Esophagus squamous epithelium (tissue), 5 donors: ENCODE measurements at regions of chrX and their contacts with region 1.

Region 1: DNA sequence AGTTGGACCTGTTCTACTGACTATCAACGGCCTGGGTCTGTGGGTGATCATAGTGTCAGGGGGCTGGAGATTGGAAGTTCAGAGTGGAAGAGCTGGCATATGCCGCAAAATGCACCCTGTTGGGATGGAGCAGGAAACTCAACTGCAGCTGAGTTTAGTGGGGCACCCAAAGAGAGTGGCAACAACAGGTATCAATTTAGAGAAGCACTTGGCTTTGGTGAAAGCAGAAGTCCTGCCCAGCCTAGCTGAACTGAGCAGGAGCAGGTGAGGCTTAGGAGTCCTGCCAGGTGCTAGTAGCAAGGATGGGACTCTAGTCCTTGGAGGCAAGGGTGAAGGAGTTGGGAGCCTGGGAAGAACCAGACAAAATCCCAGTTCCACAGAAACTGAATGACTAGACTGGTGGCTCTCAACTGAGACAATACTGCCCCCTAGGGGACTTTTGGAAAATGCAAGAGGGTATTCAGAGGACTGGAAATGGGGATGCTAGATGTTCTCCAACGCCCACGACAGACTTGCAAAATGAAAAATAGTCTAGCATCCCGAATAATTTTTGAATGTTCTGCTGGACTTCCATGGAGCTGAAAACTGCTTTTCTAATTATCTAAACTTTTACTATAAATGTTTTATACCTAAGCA is 49.4 kb downstream of the RTL9 start:
- DNase-seq: no peak
- H3K4me3 ChIP-seq: no peak overlapping the region
- H3K27ac ChIP-seq: no peak overlapping the region
- H3K4me1 ChIP-seq: peaks cover 0 to 23% (median 0%) of the 10 kb centered on the region in 3 donors
- H3K27me3 ChIP-seq: no peaks in the 10 kb centered on the region
- CTCF ChIP-seq: peak; percentile 48 to 75 (median 66)
- POLR2A ChIP-seq: no peak

Region 2: DNA sequence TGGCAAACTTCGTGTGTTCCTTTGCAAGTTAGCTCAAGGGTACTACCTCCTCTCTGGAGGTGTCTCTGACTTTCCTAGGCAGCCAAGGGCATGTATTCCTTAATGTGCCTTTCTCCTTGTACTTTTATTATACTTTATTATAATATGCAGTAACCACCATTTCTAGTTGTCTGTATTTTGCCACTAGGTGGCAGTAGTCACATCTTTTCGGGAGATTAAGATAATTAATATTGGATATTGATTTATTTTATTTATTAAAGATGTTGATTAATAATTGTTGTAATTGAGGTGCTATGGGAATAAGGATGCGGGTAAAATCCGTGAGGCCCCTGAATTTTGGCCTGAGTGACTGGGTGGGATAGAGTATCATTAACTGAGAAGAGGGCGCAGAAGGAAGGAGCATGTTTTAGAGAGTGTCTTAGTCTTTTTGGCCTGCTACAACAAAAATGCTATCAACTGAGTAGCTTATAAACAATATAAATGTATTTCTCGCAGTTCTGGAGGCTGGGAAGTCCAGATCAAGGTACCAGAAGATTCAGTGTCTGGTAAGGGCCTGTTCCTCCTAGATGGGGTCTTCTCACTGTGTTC is 251.8 kb before region 1 on chrX:
- intact Hi-C with region 1: loop called (anchors 5 kb)
- DNase-seq: no peak
- H3K4me3 ChIP-seq: no peak overlapping the region
- H3K27ac ChIP-seq: no peak overlapping the region
- H3K4me1 ChIP-seq: peaks cover 0 to 14% (median 0%) of the 10 kb centered on the region in 3 donors
- H3K27me3 ChIP-seq: no peaks in the 10 kb centered on the region
- CTCF ChIP-seq: peak in 5 of 6 experiments; percentile 28 to 69 (median 47)
- POLR2A ChIP-seq: no peak

Region 3: GRCh38 chrX:110569506-110569905 is 161.5 kb after region 1 on chrX:
- intact Hi-C with region 1: no loop called
- DNase-seq: no peak
- H3K4me3 ChIP-seq: no peak overlapping the region
- H3K27ac ChIP-seq: no peak overlapping the region
- H3K4me1 ChIP-seq: no peaks in the 10 kb centered on the region
- H3K27me3 ChIP-seq: no peaks in the 10 kb centered on the region
- CTCF ChIP-seq: no peak
- POLR2A ChIP-seq: no peak